ENCODE measurements at regions of chr5 and their contacts with region 1.

Region 1: GRCh38 chr5:81301271-81302015 is at the start of gene ZCCHC9:
- DNase-seq: peak; percentile 89

Region 2: GRCh38 chr5:81216152-81216551 is 85.3 kb before region 1 on chr5:
- CTCF ChIA-PET with region 1: no interaction called
- POLR2A ChIA-PET with region 1: no interaction called
- DNase-seq: no peak

Region 3: DNA sequence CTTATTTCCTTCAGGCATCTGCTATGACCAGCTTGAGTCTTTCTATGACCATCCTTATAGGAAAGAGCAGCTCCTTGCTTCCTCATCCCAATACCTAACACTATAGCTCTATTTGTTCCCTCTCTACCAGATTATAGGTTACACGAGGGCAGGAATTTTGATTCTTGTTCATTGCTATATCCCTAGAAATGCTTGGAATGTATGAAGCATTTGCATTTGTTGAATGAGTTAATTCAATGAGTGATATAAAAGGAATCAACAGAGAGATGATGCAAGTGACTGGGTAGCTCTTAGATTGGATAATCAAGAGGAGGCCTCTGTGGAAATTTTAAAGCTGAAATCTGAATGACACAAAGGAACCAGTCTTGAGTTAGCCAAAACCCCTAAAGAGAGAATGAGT is 13.9 kb after region 1 on chr5:
- CTCF ChIA-PET with region 1: no interaction called
- POLR2A ChIA-PET with region 1: interaction called, 11 read pairs
- DNase-seq: no peak